ENCODE measurements at regions of chr14 and their contacts with region 1.

Region 1: DNA sequence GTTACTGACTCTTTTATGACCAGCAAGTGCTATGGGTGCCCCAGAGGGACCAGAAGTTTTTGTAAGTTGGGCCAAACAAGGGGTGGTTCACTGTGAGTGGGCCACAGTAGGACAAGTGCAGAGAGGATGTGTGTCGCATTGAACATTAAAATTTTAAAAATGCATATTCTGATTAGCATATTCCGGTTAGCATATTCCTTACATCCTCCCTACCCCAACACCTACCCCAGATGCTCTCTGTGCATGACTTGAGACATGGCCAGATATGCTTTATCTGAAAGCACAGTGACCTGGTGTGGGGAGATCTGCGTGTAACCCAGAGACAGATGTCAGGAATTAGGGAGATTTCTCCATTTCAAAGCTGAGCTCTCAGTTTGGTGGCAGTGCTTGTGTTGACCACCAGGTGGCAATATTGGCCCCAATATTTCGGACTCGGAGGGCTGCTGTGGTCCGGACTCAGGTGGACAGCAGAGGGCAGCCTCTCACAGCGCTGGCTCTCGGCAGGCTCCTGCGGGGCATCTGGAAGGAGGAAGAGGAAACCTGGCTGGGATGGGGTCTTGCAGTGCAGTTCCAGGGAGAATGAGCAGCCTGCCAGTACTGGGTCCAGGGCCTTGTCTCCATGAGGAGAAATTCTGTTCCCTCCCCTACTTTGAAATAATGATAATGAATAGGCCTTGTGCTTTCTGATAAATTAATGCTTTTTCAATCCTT is 1.6 kb upstream of the CEBPE start:
- DNase-seq: peak; percentile 94
- H3K4me3 Mint-ChIP-seq: no peak overlapping the region
- H3K27ac Mint-ChIP-seq: peak overlapping the region; percentile 87
- H3K4me1 Mint-ChIP-seq: peaks cover 41% of the 10 kb centered on the region
- H3K27me3 Mint-ChIP-seq: no peaks in the 10 kb centered on the region

Region 2: DNA sequence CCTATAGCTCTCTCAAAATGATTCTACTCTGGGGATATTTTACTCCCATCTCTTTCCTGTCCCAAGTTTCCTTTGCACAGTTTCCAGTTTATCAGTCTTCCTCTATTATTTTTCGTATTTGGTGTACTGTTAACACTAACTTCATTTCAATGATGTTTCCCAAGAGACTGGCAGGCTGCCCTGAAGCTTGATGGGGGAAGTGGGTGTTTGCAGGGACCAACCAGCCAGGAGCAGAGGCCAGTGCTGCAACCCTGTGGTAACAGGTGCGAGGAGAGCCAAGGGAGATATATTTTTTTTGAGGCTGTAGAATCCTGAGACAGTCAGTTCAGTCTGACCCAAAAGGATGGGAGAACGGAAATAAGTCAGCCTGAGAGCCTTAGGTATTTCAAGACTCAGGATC is 10.2 kb after region 1 on chr14:
- CTCF ChIA-PET with region 1: interaction called, 24 read pairs
- intact Hi-C with region 1: no loop called
- DNase-seq: no peak
- H3K4me3 Mint-ChIP-seq: no peak overlapping the region
- H3K27ac Mint-ChIP-seq: no peak overlapping the region
- H3K4me1 Mint-ChIP-seq: peaks cover 1% of the 10 kb centered on the region
- H3K27me3 Mint-ChIP-seq: no peaks in the 10 kb centered on the region

Region 3: DNA sequence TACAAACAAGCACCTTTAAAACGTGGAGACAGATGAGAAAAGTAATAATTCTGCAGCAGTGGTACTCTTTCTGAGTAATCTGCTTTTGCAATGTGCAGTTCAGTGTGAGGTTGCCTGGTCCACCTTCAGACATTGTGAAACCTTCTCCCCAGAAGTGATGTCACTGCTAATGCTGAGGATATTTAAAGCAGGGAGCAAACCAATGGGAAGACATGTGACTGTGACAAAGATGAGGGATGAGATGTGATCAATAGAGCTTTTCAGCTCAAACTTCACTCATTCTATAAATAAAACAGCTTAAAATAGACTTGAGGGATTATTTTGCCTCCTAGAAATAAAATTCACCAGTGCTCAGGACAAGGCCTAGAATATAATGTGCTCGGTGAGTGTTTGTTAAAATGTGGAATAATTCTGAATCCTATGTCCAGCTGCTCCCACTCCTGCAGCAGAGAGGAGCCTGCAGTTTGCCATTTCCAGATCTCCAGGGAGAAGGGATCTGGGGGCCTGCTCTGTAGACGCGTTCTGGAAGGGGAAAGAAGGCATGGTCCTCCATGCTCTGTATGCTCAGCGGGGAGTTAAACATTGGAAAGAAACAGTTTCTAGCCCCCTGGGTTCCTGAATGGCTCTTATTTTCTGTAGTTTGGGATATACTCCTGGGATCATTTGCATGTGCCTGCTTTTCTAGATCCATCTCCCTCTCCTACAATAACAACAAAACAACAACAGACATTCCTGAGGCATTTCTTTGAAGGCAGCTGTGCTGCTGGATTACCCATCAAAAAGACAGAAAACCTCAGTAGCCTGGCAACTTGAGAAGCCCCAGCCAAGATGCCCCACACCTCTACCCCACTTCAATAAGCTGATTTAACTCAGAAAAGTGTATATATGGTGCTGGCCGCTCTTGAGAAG is 53.8 kb after region 1 on chr14:
- CTCF ChIA-PET with region 1: interaction called, 33 read pairs
- intact Hi-C with region 1: no loop called
- DNase-seq: no peak
- H3K4me3 Mint-ChIP-seq: no peak overlapping the region
- H3K27ac Mint-ChIP-seq: no peak overlapping the region
- H3K4me1 Mint-ChIP-seq: peaks cover 31% of the 10 kb centered on the region
- H3K27me3 Mint-ChIP-seq: peaks cover 4% of the 10 kb centered on the region

Region 4: GRCh38 chr14:23237772-23238594 is 117.3 kb after region 1 on chr14 and contains the start of gene RNF212B:
- CTCF ChIA-PET with region 1: interaction called, 8 read pairs
- intact Hi-C with region 1: loop called (anchors 5 kb)
- DNase-seq: peak; percentile 92
- H3K4me3 Mint-ChIP-seq: peak within 1 kb of the TSS; percentile 65
- H3K27ac Mint-ChIP-seq: no peak within 1 kb of the TSS
- H3K4me1 Mint-ChIP-seq: peaks cover 5% of the 10 kb centered on the region
- H3K27me3 Mint-ChIP-seq: peaks cover 10% of the 10 kb centered on the region
- total RNA-seq, gene RNF212B: not detected

Region 5: DNA sequence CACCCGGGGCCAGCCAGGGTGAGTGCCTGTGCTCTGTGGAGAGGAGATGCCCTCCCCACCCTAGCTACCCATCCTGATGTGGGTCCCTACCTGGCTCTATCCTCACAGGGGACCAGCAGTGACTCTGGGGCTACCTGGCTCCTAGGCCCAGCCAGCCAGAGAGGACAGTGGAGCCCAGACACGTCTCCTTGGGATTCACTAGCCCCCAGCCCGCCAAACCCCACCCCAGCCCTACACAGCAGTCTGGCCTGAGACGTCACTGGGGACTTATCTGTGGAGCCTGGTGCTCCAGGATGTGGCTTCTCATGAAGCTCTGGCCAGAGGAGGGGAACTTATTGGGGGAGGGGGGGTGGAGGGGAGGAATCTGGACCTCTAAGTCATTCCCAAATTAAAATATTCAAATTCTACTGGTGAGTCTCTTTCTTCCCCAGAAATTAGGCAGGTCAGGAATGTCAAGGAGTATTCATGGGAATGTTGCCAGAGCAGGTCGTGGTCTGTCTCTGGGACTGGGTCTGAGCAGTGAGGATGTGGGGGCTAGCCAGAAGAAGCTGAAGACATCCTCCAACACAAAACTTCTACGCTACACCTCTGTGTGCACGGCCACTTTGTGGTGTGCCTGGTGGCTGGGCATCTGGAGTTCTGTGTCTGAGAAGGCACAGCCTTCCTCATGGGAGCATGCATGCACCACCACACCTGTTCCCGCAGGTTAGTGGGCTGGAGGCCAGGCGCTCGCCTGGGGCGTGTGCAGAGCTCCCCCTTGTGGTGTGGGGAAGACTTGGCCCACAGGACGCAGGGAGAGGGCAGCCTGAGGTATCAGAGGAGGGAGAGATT is 258.9 kb after region 1 on chr14:
- CTCF ChIA-PET with region 1: interaction called, 16 read pairs
- intact Hi-C with region 1: loop called (anchors 1 kb)
- DNase-seq: peak; percentile 66
- H3K4me3 Mint-ChIP-seq: no peak overlapping the region
- H3K27ac Mint-ChIP-seq: no peak overlapping the region
- H3K4me1 Mint-ChIP-seq: no peaks in the 10 kb centered on the region
- H3K27me3 Mint-ChIP-seq: no peaks in the 10 kb centered on the region

Region 6: GRCh38 chr14:23539248-23540140 is 418.8 kb after region 1 on chr14:
- CTCF ChIA-PET with region 1: interaction called, 5 read pairs
- intact Hi-C with region 1: loop called (anchors 1 kb)
- DNase-seq: peak; percentile 26
- H3K4me3 Mint-ChIP-seq: no peak overlapping the region
- H3K27ac Mint-ChIP-seq: no peak overlapping the region
- H3K4me1 Mint-ChIP-seq: no peaks in the 10 kb centered on the region
- H3K27me3 Mint-ChIP-seq: no peaks in the 10 kb centered on the region

Measured in activated naive CD4-positive, alpha-beta T cell treated with anti-CD3 and anti-CD28 coated beads for 36 hours (primary cell).